ENCODE measurements at regions of chr4 and their contacts with region 1.

Region 1: DNA sequence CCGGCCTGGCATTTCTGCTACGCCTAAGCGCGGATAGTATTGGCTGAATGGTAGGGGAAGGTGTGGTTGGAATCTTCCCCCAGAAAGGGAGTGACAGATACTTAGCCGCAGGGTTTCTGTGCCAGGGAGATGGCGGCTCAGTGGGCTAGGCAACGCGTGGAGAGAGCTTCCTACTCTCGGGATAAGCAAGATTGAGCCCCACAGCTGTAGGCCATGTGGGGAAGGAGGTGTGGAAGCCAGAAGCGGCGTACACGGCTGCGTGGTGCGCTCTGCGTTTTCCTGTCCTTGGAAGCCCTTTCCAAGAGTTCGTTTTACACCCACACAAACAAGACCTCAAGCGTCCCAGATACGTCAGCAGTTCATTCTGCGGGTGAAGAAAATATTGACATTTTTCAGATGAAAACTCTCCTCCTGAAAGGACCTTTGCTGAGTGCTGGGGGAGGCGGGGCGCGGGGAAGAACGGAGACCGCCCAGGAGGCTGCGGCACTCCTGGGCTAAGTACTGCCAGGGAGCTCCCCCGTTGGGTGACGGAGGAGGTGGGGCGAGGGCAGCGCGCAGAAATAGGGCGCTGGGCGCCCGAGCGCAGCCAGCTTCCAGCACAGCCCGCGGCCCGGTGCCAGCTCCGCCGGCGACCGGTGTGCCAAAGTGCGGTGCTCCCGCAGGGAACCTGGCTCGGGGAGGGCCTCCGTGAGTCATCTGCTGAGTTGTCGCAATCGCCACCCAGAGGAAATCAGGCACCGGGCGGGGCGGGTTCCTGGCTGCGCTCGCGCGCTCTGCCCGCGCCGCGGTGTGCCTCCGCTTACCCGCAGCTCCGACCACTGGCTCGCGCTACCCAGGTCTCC is at the start of gene GPAT3:
- DNase-seq: peak; percentile 78 to 91 (median 89)
- ATAC-seq: peak; percentile 83 to 94 (median 88)
- H3K4me3 ChIP-seq: peak within 1 kb of the TSS; percentile 57 to 90 (median 73)
- H3K27ac ChIP-seq: peak within 1 kb of the TSS; percentile 70 to 95 (median 92)
- H3K4me1 ChIP-seq: peaks cover 0 to 24% (median 8%) of the 10 kb centered on the region in 12 donors
- H3K27me3 ChIP-seq: peaks cover 0 to 19% (median 0%) of the 10 kb centered on the region in 9 donors
- CTCF ChIP-seq: no peak
- POLR2A ChIP-seq: peak in 1 of 2 donors; percentile 69
- total RNA-seq, gene GPAT3: 26.8 to 64.5 (median 38.8) TPM

Region 2: GRCh38 chr4:83284193-83285054 is 251.3 kb before region 1 on chr4 and contains the start of gene COQ2:
- intact Hi-C with region 1: no loop called
- DNase-seq: peak; percentile 96 to 98 (median 97)
- ATAC-seq: peak; percentile 98 to 99 (median 98)
- H3K4me3 ChIP-seq: peak within 1 kb of the TSS; percentile 45 to 91 (median 72)
- H3K27ac ChIP-seq: peak within 1 kb of the TSS; percentile 91 to 100 (median 96)
- H3K4me1 ChIP-seq: peaks cover 0 to 43% (median 8%) of the 10 kb centered on the region in 12 donors
- H3K27me3 ChIP-seq: no peaks in the 10 kb centered on the region
- CTCF ChIP-seq: peak in 11 of 12 donors; percentile 21 to 63 (median 47)
- POLR2A ChIP-seq: peak in 1 of 2 donors; percentile 81
- total RNA-seq, gene COQ2: 18.0 to 26.3 (median 22.9) TPM

Region 3: GRCh38 chr4:83484500-83485461 is 51.0 kb before region 1 on chr4 and contains the start of gene ABRAXAS1:
- intact Hi-C with region 1: loop called in 1 of 10 experiments (anchors 2 kb)
- DNase-seq: peak; percentile 94 to 96 (median 95)
- ATAC-seq: peak; percentile 95 to 100 (median 98)
- H3K4me3 ChIP-seq: peak within 1 kb of the TSS; percentile 47 to 94 (median 86)
- H3K27ac ChIP-seq: peak within 1 kb of the TSS; percentile 76 to 96 (median 88)
- H3K4me1 ChIP-seq: peaks cover 0 to 19% (median 7%) of the 10 kb centered on the region in 12 donors
- H3K27me3 ChIP-seq: no peaks in the 10 kb centered on the region
- CTCF ChIP-seq: peak in 1 of 12 donors; percentile 13
- POLR2A ChIP-seq: peak; percentile 76 to 97
- total RNA-seq, gene ABRAXAS1: 3.4 to 10.2 (median 7.8) TPM

Region 4: DNA sequence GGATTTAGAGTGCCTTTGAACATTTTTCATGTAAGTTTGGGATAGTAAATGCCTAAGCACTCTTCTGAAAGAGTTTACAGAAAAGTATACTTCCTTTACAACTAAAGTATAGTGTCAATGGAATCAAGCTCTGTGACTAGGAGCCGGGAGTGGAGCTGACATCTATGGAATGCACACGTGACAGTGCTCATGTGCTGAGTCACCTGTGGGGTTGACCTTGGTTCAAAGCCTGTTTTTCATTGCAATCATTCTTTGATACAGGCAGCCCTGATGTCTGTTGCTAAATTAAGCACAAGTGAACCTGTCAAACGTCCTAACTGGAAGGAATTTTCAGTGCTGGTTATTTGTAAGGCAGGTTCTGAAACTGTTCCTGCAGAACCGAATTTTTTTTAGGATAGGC is 82.7 kb after region 1 on chr4:
- intact Hi-C with region 1: loop called in 3 of 10 experiments (anchors 5 to 10 kb)
- DNase-seq: peak in 4 of 5 donors; percentile 57 to 72 (median 66)
- ATAC-seq: peak; percentile 95 to 98 (median 96)
- H3K4me3 ChIP-seq: no peak overlapping the region
- H3K27ac ChIP-seq: peak overlapping the region; percentile 63 to 96 (median 86)
- H3K4me1 ChIP-seq: peaks cover 0 to 35% (median 11%) of the 10 kb centered on the region in 12 donors
- H3K27me3 ChIP-seq: no peaks in the 10 kb centered on the region
- CTCF ChIP-seq: no peak
- POLR2A ChIP-seq: peak in 1 of 2 donors; percentile 24

Region 5: DNA sequence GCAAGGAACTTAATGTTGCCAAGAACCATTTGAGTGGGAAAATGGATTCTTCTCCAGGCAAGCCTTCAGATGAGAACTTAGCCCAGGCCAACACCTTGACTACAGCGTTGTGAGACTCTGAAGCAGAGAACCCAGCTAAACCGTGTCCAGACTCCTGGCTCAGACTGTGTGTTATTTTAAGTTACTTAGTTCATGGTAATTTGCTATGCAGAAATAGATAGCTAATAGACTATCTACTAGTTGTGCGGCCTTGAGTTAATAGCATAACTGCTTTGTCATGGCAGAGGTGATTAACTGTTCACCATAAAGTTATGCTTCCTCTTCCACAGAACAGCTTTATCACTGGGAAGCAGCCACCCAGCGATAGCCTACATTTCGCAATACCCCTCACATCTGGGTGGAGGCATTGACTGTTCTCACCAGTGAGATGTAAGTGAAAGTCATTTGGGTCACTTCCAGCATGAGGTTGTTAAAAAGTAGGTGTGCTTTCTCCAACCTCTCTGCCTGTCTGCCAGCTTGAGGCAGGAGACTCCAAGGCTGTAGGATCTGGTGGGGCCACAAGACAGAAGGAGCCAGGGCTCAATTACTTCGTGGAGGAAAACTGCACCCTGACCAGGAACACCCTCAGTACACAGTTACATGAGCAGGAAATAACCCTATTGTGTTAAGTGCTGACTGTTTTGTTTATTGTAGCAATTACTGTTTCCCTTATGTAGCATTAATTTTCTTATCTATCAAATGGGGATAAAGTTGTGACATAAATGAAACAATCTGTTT is 94.4 kb after region 1 on chr4:
- intact Hi-C with region 1: loop called in 8 of 10 experiments (anchors 2 to 10 kb)
- DNase-seq: peak in 3 of 5 donors; percentile 30 to 46 (median 40)
- ATAC-seq: peak; percentile 10 to 81 (median 52)
- H3K4me3 ChIP-seq: no peak overlapping the region
- H3K27ac ChIP-seq: peak overlapping the region in 8 of 12 donors; percentile 4 to 50 (median 16)
- H3K4me1 ChIP-seq: peaks cover 0 to 39% (median 14%) of the 10 kb centered on the region in 12 donors
- H3K27me3 ChIP-seq: no peaks in the 10 kb centered on the region
- CTCF ChIP-seq: no peak
- POLR2A ChIP-seq: no peak

Measured in heart left ventricle (tissue), 16 donors.